ENCODE measurements at regions of chr7 and their contacts with region 1.

Region 1: GRCh38 chr7:135645296-135645904 is 16.9 kb upstream of the STMP1 start:
- DNase-seq: peak in 2 of 5 donors; percentile 26 to 33
- H3K4me3 ChIP-seq: no peak overlapping the region
- H3K4me3 Mint-ChIP-seq: no peak overlapping the region
- H3K27ac ChIP-seq: no peak overlapping the region
- H3K27ac Mint-ChIP-seq: peak overlapping the region in 2 of 8 donors; percentile 12 to 20
- H3K4me1 ChIP-seq: no peaks in the 10 kb centered on the region
- H3K4me1 Mint-ChIP-seq: peaks cover 0 to 5% (median 2%) of the 10 kb centered on the region in 3 donors
- H3K27me3 ChIP-seq: no peaks in the 10 kb centered on the region
- H3K27me3 Mint-ChIP-seq: no peaks in the 10 kb centered on the region

Region 2: GRCh38 chr7:135274495-135275268 is 370.7 kb before region 1 on chr7:
- CTCF ChIA-PET with region 1: interaction called, 45 read pairs
- POLR2A ChIA-PET with region 1: no interaction called
- DNase-seq: peak; percentile 50 to 73 (median 54)
- H3K4me3 ChIP-seq: no peak overlapping the region
- H3K4me3 Mint-ChIP-seq: no peak overlapping the region
- H3K27ac ChIP-seq: no peak overlapping the region
- H3K27ac Mint-ChIP-seq: no peak overlapping the region
- H3K4me1 ChIP-seq: no peaks in the 10 kb centered on the region
- H3K4me1 Mint-ChIP-seq: peaks cover 0 to 2% (median 2%) of the 10 kb centered on the region in 3 donors
- H3K27me3 ChIP-seq: no peaks in the 10 kb centered on the region
- H3K27me3 Mint-ChIP-seq: peaks cover 8 to 14% of the 10 kb centered on the region in 2 donors

Region 3: GRCh38 chr7:135281363-135281949 is 363.9 kb before region 1 on chr7:
- CTCF ChIA-PET with region 1: interaction called, 45 read pairs
- POLR2A ChIA-PET with region 1: no interaction called
- DNase-seq: peak; percentile 55 to 81 (median 70)
- H3K4me3 ChIP-seq: no peak overlapping the region
- H3K4me3 Mint-ChIP-seq: peak overlapping the region in 3 of 7 donors; percentile 2 to 29 (median 24)
- H3K27ac ChIP-seq: no peak overlapping the region
- H3K27ac Mint-ChIP-seq: peak overlapping the region in 1 of 8 donors; percentile 84
- H3K4me1 ChIP-seq: peaks cover 4% of the 10 kb centered on the region
- H3K4me1 Mint-ChIP-seq: peaks cover 22% of the 10 kb centered on the region in 3 donors
- H3K27me3 ChIP-seq: no peaks in the 10 kb centered on the region
- H3K27me3 Mint-ChIP-seq: peaks cover 2 to 25% of the 10 kb centered on the region in 2 donors

Region 4: DNA sequence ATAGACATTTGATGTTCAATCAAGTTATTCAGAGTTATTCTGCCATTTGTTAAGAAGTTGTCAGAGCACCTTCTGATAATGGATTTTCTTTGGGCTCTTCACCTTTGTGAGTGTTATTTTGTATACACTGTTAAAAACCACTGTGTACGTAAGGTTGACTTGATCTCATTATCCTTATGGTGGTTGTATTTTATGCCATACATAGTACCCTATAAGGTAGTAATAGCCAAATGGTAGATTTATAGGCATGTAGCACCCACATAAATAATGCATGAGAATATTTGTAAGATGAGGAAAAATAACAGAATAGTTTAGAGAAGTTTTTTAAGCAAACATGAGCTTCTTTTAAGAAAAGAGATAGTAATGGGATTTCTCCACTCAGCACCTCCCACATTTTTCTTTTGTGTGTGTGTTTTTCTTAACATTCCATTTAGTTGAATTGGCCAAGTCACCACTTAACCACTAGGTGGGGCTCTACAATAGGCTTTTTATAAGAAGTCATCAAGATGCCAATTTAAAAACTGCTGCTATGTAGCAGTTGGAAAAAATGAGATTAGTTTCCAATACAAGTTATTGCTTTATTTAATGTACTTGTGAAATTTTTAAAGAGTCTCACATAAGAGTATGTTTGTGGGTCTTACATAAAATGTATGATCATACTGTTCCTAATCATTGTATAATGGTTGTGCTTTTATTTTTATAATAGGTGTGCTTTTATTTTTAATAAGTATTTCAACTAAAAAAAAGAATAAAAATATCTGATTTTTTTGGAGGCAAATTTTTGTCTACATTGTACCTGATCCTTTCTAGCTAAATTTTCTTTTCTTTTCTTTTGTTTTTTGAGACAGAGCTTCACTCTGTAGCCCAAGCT is 24.2 kb before region 1 on chr7:
- CTCF ChIA-PET with region 1: interaction called, 24 read pairs
- POLR2A ChIA-PET with region 1: no interaction called
- DNase-seq: peak in 2 of 5 donors; percentile 14 to 31
- H3K4me3 ChIP-seq: no peak overlapping the region
- H3K4me3 Mint-ChIP-seq: no peak overlapping the region
- H3K27ac ChIP-seq: no peak overlapping the region
- H3K27ac Mint-ChIP-seq: peak overlapping the region in 1 of 8 donors; percentile 17
- H3K4me1 ChIP-seq: no peaks in the 10 kb centered on the region
- H3K4me1 Mint-ChIP-seq: no peaks in the 10 kb centered on the region
- H3K27me3 ChIP-seq: no peaks in the 10 kb centered on the region
- H3K27me3 Mint-ChIP-seq: no peaks in the 10 kb centered on the region

Region 5: DNA sequence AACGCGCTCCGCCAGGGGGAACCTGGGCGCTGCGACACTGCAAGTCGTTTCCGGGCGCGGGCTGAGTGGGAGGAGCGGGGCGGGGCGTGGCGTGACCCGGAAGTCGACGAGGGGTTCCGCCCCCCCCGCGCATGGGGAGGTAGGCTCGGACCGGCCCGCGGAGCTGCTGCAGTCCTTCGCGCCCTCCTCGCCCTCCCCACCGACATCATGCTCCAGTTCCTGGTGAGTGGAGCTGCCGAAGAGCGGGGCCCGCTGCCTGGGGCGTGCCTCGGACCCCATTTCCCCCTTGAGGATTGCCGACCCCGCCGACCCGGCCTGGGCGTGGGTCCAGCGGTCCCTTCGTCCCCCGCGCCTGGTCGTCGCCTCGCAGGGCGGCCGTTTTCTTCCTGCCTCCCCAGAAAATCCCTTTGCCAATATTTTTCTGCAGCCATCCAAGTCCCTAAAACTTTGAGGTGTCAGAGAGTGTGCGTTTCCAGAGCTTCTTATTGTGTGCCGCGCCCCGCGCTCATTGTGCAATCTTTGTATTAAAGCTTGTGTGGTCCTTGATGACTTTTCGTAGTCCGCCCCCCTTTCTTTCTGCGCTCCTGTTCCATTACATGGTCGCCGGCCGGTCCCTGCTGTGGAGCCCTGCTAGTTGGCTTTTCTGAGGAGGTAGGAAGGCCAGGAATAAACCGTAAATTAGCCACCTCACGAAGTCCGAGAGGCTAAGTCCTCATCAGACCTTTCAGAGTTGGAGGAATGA is 17.1 kb after region 1 on chr7 and contains the start of gene STMP1:
- CTCF ChIA-PET with region 1: interaction called, 26 read pairs
- POLR2A ChIA-PET with region 1: no interaction called
- DNase-seq: peak; percentile 92 to 98 (median 95)
- H3K4me3 ChIP-seq: peak within 1 kb of the TSS; percentile 62
- H3K4me3 Mint-ChIP-seq: peak within 1 kb of the TSS; percentile 91 to 99 (median 95)
- H3K27ac ChIP-seq: peak within 1 kb of the TSS; percentile 81
- H3K27ac Mint-ChIP-seq: peak within 1 kb of the TSS; percentile 74 to 97 (median 91)
- H3K4me1 ChIP-seq: peaks cover 28% of the 10 kb centered on the region
- H3K4me1 Mint-ChIP-seq: peaks cover 35 to 52% (median 50%) of the 10 kb centered on the region in 3 donors
- H3K27me3 ChIP-seq: no peaks in the 10 kb centered on the region
- H3K27me3 Mint-ChIP-seq: no peaks in the 10 kb centered on the region
- total RNA-seq, gene STMP1: 25.7 to 26.1 TPM